Endothelial cell of umbilical vein (primary cell): ENCODE measurements at regions of chr7 and their contacts with region 1.

Region 1: GRCh38 chr7:107691716-107692115 is 31.1 kb downstream of the SLC26A4 start:
- DNase-seq: peak; percentile 73
- H3K4me3 ChIP-seq: no peak overlapping the region
- H3K27ac ChIP-seq: no peak overlapping the region
- H3K4me1 ChIP-seq: peaks cover 31% of the 10 kb centered on the region
- H3K27me3 ChIP-seq: no peaks in the 10 kb centered on the region
- CTCF ChIP-seq: no peak
- POLR2A ChIP-seq: no peak

Region 2: GRCh38 chr7:107563775-107564552 is 127.8 kb before region 1 on chr7 and contains the starts of genes COG5 and DUS4L:
- CTCF ChIA-PET with region 1: no interaction called
- POLR2A ChIA-PET with region 1: no interaction called
- dilution Hi-C with region 1: no loop called
- intact Hi-C with region 1: no loop called
- DNase-seq: peak; percentile 89
- H3K4me3 ChIP-seq: peak within 1 kb of the TSS; percentile 87 to 99 (median 95)
- H3K27ac ChIP-seq: peak within 1 kb of the TSS; percentile 91
- H3K4me1 ChIP-seq: peaks cover 33% of the 10 kb centered on the region
- H3K27me3 ChIP-seq: no peaks in the 10 kb centered on the region
- CTCF ChIP-seq: no peak
- POLR2A ChIP-seq: peak; percentile 88
- total RNA-seq, gene COG5: 42.4 and 45.3 TPM in 2 replicates
- total RNA-seq, gene DUS4L: 9.6 and 9.8 TPM in 2 replicates

Region 3: GRCh38 chr7:107680478-107680877 is 11.2 kb before region 1 on chr7:
- CTCF ChIA-PET with region 1: interaction called, 19 read pairs
- POLR2A ChIA-PET with region 1: no interaction called
- dilution Hi-C with region 1: no loop called
- intact Hi-C with region 1: no loop called
- DNase-seq: no peak
- H3K4me3 ChIP-seq: no peak overlapping the region
- H3K27ac ChIP-seq: no peak overlapping the region
- H3K4me1 ChIP-seq: no peaks in the 10 kb centered on the region
- H3K27me3 ChIP-seq: no peaks in the 10 kb centered on the region
- CTCF ChIP-seq: no peak
- POLR2A ChIP-seq: no peak